Spleen (tissue), 13 donors: ENCODE measurements at regions of chr1 and their contacts with region 1.

Region 1: GRCh38 chr1:221435504-221435904 is 306.4 kb downstream of the DUSP10 start:
- DNase-seq: no peak
- H3K4me3 ChIP-seq: no peak overlapping the region
- H3K27ac ChIP-seq: peak overlapping the region in 3 of 8 donors; percentile 5 to 35 (median 32)
- H3K4me1 ChIP-seq: peaks cover 11 to 32% (median 25%) of the 10 kb centered on the region in 6 donors
- H3K27me3 ChIP-seq: no peaks in the 10 kb centered on the region
- CTCF ChIP-seq: peak; percentile 76 to 94 (median 90)
- POLR2A ChIP-seq: no peak

Region 2: GRCh38 chr1:220810179-220810653 is 625.3 kb before region 1 on chr1:
- intact Hi-C with region 1: loop called (anchors 10 kb)
- DNase-seq: peak; percentile 94
- H3K4me3 ChIP-seq: peak overlapping the region in 2 of 8 donors; percentile 21 to 57
- H3K27ac ChIP-seq: no peak overlapping the region
- H3K4me1 ChIP-seq: peaks cover 0 to 16% (median 11%) of the 10 kb centered on the region in 6 donors
- H3K27me3 ChIP-seq: peaks cover 0 to 30% (median 0%) of the 10 kb centered on the region in 7 donors
- CTCF ChIP-seq: peak; percentile 70 to 95 (median 90)
- POLR2A ChIP-seq: no peak

Region 3: DNA sequence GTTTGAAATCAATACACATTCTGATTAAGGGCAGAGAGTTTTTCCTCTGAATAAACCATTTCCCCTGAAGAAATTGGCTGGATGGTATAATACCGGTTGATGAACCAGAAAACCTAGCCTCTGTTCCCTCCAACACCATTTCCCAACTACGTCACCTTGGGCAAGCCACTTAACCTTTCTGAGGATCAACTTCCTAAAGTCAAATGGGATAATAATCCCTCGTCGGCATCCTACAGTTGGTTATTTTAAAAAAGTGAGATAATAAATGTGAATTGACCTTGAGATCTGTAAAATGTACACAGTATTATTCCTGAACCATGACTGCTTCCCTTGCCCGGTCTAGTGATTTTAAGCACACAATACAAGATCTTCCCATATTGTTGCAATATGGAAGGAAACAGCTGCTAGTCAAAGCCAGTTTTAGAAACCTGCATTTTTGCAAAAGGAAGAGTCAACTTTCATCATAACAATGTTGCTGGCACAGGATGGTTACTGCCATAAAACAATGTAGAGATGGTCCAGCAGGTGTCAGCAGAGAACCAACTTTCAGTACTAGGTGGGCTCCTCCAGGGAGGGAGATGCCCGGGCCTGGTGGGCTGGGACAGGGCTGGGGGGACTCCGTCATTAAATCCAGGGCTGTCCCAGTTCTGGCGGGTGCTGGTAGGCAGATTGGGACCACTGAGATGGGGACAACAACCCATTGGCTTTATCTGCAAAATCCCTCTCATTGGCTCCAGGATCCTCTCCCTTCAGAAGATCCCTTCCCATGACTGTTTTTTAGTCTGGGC is 561.4 kb before region 1 on chr1:
- intact Hi-C with region 1: loop called (anchors 5 kb)
- DNase-seq: peak; percentile 78
- H3K4me3 ChIP-seq: no peak overlapping the region
- H3K27ac ChIP-seq: peak overlapping the region in 3 of 8 donors; percentile 10 to 41 (median 26)
- H3K4me1 ChIP-seq: peaks cover 19 to 61% (median 39%) of the 10 kb centered on the region in 6 donors
- H3K27me3 ChIP-seq: peaks cover 0 to 49% (median 0%) of the 10 kb centered on the region in 7 donors
- CTCF ChIP-seq: peak; percentile 52 to 85 (median 72)
- POLR2A ChIP-seq: no peak

Region 4: GRCh38 chr1:221263831-221264767 is 171.4 kb before region 1 on chr1:
- intact Hi-C with region 1: loop called (anchors 2 kb)
- DNase-seq: no peak
- H3K4me3 ChIP-seq: no peak overlapping the region
- H3K27ac ChIP-seq: peak overlapping the region in 7 of 8 donors; percentile 36 to 68 (median 64)
- H3K4me1 ChIP-seq: peaks cover 0 to 9% (median 2%) of the 10 kb centered on the region in 6 donors
- H3K27me3 ChIP-seq: peaks cover 0 to 5% (median 0%) of the 10 kb centered on the region in 7 donors
- CTCF ChIP-seq: peak; percentile 6 to 75 (median 67)
- POLR2A ChIP-seq: no peak

Region 5: GRCh38 chr1:221543529-221544120 is 108.1 kb after region 1 on chr1:
- intact Hi-C with region 1: no loop called
- DNase-seq: no peak
- H3K4me3 ChIP-seq: no peak overlapping the region
- H3K27ac ChIP-seq: no peak overlapping the region
- H3K4me1 ChIP-seq: no peaks in the 10 kb centered on the region
- H3K27me3 ChIP-seq: peaks cover 0 to under 1% (median 0%) of the 10 kb centered on the region in 7 donors
- CTCF ChIP-seq: peak in 5 of 11 experiments; percentile 27 to 46 (median 37)
- POLR2A ChIP-seq: no peak